Mammary epithelial cell (primary cell): ENCODE measurements at regions of chr19 and their contacts with region 1.

Region 1: GRCh38 chr19:2274931-2275535 is 6.9 kb downstream of the PEAK3 start:
- DNase-seq: peak; percentile 44
- H3K4me3 ChIP-seq: no peak overlapping the region
- H3K27ac ChIP-seq: no peak overlapping the region
- H3K4me1 ChIP-seq: peaks cover 24% of the 10 kb centered on the region
- H3K27me3 ChIP-seq: no peaks in the 10 kb centered on the region
- CTCF ChIP-seq: peak; percentile 44 to 62

Region 2: DNA sequence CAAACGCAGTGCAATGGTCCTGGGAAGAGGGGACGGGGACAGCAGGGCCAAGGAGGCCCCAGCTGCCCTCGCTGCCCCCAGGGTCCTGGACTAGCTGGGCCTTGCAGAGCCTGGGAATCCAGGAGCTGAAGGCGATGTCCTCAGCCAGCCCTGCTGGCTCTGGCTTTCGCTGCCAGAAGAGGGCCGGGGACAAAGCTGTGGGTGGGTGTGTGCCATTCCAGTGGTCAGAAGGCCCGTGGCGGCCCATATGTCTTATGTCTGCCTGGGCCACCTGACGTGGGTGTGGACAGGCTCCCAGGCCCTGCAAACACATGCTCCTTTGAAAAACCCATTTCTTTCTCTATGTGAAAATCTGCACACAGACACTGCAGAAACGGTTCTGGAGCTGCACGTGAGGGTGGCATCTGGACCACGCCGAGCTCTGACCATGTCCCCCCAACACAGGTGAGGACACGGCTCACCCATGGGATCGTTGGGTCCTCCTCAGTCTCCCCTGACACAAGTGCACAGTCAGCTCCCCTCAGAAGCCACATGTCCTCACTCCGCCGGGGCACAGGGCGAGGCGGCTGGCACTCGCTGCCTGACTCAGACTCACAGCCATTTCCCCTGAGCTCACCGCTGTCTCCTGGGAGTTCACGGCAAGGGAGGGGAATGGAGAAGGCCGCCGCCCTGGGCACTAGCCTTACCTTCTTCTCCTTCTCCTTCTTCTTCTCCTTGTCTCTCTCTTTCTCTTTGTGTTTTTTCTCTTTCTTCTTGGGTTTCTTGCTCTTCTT is 161.4 kb before region 1 on chr19:
- CTCF ChIA-PET with region 1: no interaction called
- dilution Hi-C with region 1: no loop called
- in situ Hi-C with region 1: no loop called
- intact Hi-C with region 1: no loop called
- DNase-seq: peak; percentile 73
- H3K4me3 ChIP-seq: no peak overlapping the region
- H3K27ac ChIP-seq: no peak overlapping the region
- H3K4me1 ChIP-seq: peaks cover 18% of the 10 kb centered on the region
- H3K27me3 ChIP-seq: no peaks in the 10 kb centered on the region
- CTCF ChIP-seq: no peak

Region 3: DNA sequence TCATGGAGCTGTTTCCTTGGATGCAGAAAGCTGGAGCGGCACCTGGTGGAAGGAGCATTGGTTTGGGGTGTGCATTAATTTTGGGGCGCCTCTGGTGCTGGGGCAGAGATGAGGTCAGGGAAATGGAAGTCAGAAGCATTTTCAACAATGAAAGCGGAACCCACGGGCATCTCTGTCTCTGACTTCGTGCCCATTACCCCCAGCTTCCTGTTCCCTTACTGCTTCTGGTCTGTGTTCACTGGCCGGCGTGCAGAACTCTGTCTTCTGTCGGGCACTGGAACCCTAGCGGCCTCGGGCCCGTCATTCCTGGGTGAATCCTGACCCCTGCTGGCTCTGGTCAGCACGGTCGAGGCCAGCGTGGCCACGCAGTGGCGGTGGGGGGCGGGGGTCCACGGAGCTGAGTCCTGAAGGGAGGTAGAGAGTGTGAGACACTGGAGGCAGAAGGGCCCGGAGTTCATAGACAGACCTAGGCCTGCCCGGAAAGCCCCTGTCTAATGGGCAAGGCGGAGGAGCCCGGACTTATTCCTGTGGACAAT is 40.9 kb after region 1 on chr19:
- CTCF ChIA-PET with region 1: no interaction called
- dilution Hi-C with region 1: loop called (anchors 5 kb)
- in situ Hi-C with region 1: no loop called
- intact Hi-C with region 1: no loop called
- DNase-seq: no peak
- H3K4me3 ChIP-seq: no peak overlapping the region
- H3K27ac ChIP-seq: no peak overlapping the region
- H3K4me1 ChIP-seq: no peaks in the 10 kb centered on the region
- H3K27me3 ChIP-seq: no peaks in the 10 kb centered on the region
- CTCF ChIP-seq: peak in 1 of 2 donors; percentile 18

Region 4: GRCh38 chr19:2391118-2391725 is 116.2 kb after region 1 on chr19:
- CTCF ChIA-PET with region 1: no interaction called
- dilution Hi-C with region 1: no loop called
- in situ Hi-C with region 1: no loop called
- intact Hi-C with region 1: loop called (anchors 1 kb)
- DNase-seq: peak; percentile 51
- H3K4me3 ChIP-seq: no peak overlapping the region
- H3K27ac ChIP-seq: no peak overlapping the region
- H3K4me1 ChIP-seq: no peaks in the 10 kb centered on the region
- H3K27me3 ChIP-seq: no peaks in the 10 kb centered on the region
- CTCF ChIP-seq: peak; percentile 76

Region 5: DNA sequence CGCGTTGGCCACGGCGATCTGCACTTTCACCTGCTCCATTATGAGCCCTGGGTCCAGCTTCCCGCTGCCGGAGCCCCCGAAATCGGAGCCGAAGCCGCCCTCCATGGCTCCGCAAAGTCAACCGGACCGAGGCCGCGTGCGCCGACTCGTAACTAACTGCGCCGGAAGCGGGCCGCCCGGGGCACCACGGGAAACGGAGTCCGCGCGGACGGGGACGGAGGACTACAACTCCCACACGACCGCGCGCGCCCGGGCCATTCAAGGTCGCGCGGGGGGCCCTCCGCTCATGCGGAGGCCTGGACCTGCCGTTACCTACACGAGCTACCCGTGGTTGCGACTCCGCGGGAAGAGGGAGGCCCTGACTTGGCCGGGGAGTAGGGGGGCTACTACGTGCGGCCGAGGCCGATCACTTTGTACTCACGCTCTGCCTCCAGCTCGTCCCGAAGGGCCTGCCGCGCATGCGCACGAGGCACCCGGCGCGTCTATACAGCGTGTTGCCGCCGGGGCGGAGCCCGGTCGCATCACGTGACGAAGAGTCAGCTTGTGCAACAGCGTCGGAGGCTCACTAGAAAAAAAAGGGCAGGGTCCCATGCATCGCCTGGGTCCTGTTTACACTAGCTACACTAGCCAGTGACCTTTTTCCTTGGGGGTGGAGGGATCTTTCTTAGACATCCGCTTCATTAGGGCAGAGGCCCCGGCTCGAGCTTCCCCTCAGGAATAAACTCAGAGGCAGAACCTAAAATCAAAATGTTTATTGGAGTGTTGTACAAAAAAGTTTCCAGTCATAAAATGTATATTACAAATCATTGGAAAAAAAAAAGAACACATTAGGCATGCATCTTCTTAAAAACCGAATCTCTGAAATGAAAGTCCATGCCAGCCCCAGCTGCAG is 152.6 kb after region 1 on chr19 and contains the start of gene TIMM13:
- CTCF ChIA-PET with region 1: no interaction called
- dilution Hi-C with region 1: loop called (anchors 25 kb)
- in situ Hi-C with region 1: no loop called
- intact Hi-C with region 1: no loop called
- DNase-seq: peak; percentile 92
- H3K4me3 ChIP-seq: peak within 1 kb of the TSS; percentile 53 to 99 (median 77)
- H3K27ac ChIP-seq: peak within 1 kb of the TSS; percentile 74
- H3K4me1 ChIP-seq: peaks cover 23% of the 10 kb centered on the region
- H3K27me3 ChIP-seq: no peaks in the 10 kb centered on the region
- CTCF ChIP-seq: no peak
- total RNA-seq, gene TIMM13: 20.8 to 133 TPM